Transverse colon (tissue), 4 donors: ENCODE measurements at regions of chr16 and their contacts with region 1.

Region 1: DNA sequence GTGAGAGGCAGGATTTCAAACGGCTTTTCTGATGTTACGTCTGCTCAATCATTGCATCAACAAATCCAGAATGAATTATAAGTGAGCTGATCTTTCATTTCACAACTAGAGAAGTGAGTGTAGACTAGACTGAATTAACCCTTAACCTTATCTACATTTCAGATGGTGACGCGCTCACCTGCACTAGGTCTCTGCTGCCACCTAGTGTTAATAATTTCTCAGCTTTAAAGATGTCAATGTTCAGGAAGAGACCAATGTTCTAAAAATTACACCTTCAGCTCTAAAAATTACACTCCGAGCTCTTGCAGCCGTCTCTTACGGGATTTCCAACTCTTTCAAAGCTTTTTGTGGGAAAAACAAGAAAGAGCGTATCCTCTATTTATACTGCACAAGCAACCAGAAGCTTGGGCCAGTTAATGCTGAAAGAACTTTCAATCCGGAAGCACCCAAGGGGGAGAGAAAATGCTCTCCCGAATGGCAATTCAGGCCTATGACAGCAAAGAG is 88.2 kb upstream of the FA2H start:
- DNase-seq: no peak
- H3K4me3 ChIP-seq: no peak overlapping the region
- H3K27ac ChIP-seq: no peak overlapping the region
- H3K4me1 ChIP-seq: no peaks in the 10 kb centered on the region
- H3K27me3 ChIP-seq: no peaks in the 10 kb centered on the region
- CTCF ChIP-seq: peak; percentile 79 to 87 (median 83)
- EP300 ChIP-seq: no peak
- POLR2A ChIP-seq: no peak

Region 2: GRCh38 chr16:74709441-74709877 is 153.3 kb before region 1 on chr16:
- in situ Hi-C with region 1: loop called (anchors 5 to 25 kb)
- intact Hi-C with region 1: loop called (anchors 5 kb)
- DNase-seq: peak; percentile 87
- H3K4me3 ChIP-seq: no peak overlapping the region
- H3K27ac ChIP-seq: no peak overlapping the region
- H3K4me1 ChIP-seq: peaks cover 0 to 5% (median 0%) of the 10 kb centered on the region in 4 donors
- H3K27me3 ChIP-seq: no peaks in the 10 kb centered on the region
- CTCF ChIP-seq: peak; percentile 93 to 98 (median 95)
- EP300 ChIP-seq: no peak
- POLR2A ChIP-seq: no peak

Region 3: GRCh38 chr16:74718741-74719610 is 143.8 kb before region 1 on chr16:
- in situ Hi-C with region 1: loop called (anchors 5 to 25 kb)
- intact Hi-C with region 1: loop called (anchors 5 kb)
- DNase-seq: no peak
- H3K4me3 ChIP-seq: no peak overlapping the region
- H3K27ac ChIP-seq: no peak overlapping the region
- H3K4me1 ChIP-seq: no peaks in the 10 kb centered on the region
- H3K27me3 ChIP-seq: no peaks in the 10 kb centered on the region
- CTCF ChIP-seq: no peak
- EP300 ChIP-seq: no peak
- POLR2A ChIP-seq: no peak

Region 4: GRCh38 chr16:74813109-74813641 is 49.6 kb before region 1 on chr16:
- in situ Hi-C with region 1: loop called in 1 of 4 experiments (anchors 10 kb)
- intact Hi-C with region 1: loop called (anchors 2 kb)
- DNase-seq: peak; percentile 85
- H3K4me3 ChIP-seq: no peak overlapping the region
- H3K27ac ChIP-seq: no peak overlapping the region
- H3K4me1 ChIP-seq: peaks cover 0 to 7% (median 2%) of the 10 kb centered on the region in 4 donors
- H3K27me3 ChIP-seq: no peaks in the 10 kb centered on the region
- CTCF ChIP-seq: peak; percentile 90 to 97 (median 96)
- EP300 ChIP-seq: no peak
- POLR2A ChIP-seq: no peak